ENCODE measurements at regions of chr14 and their contacts with region 1.

Region 1: GRCh38 chr14:73825551-73826188 is 26.0 kb upstream of the PTGR2 start:
- DNase-seq: peak; percentile 79 to 86
- H3K4me3 ChIP-seq: no peak overlapping the region
- H3K4me3 Mint-ChIP-seq: no peak overlapping the region
- H3K27ac Mint-ChIP-seq: no peak overlapping the region
- H3K4me1 ChIP-seq: peaks cover 4% of the 10 kb centered on the region; the same call in 1 of the 2 replicates
- H3K4me1 Mint-ChIP-seq: peaks cover 8% of the 10 kb centered on the region
- H3K27me3 ChIP-seq: no peaks in the 10 kb centered on the region
- H3K27me3 Mint-ChIP-seq: no peaks in the 10 kb centered on the region
- CTCF ChIP-seq: peak; percentile 89 to 93

Region 2: GRCh38 chr14:73553845-73554244 is 271.8 kb before region 1 on chr14:
- CTCF ChIA-PET with region 1: no interaction called
- POLR2A ChIA-PET with region 1: no interaction called
- intact Hi-C with region 1: no loop called
- DNase-seq: no peak
- H3K4me3 ChIP-seq: no peak overlapping the region
- H3K4me3 Mint-ChIP-seq: no peak overlapping the region
- H3K27ac Mint-ChIP-seq: no peak overlapping the region
- H3K4me1 ChIP-seq: no peaks in the 10 kb centered on the region
- H3K4me1 Mint-ChIP-seq: no peaks in the 10 kb centered on the region
- H3K27me3 ChIP-seq: no peaks in the 10 kb centered on the region
- H3K27me3 Mint-ChIP-seq: no peaks in the 10 kb centered on the region
- CTCF ChIP-seq: no peak

Region 3: GRCh38 chr14:73741386-73741875 is 84.2 kb before region 1 on chr14:
- CTCF ChIA-PET with region 1: interaction called, 4 read pairs
- POLR2A ChIA-PET with region 1: no interaction called
- intact Hi-C with region 1: loop called (anchors 5 kb)
- DNase-seq: peak; percentile 56 to 73
- H3K4me3 ChIP-seq: peak overlapping the region; percentile 15; the same call in 1 of the 2 replicates
- H3K4me3 Mint-ChIP-seq: peak overlapping the region; percentile 69
- H3K27ac Mint-ChIP-seq: peak overlapping the region; percentile 83
- H3K4me1 ChIP-seq: peaks cover 66% of the 10 kb centered on the region
- H3K4me1 Mint-ChIP-seq: peaks cover 39% of the 10 kb centered on the region
- H3K27me3 ChIP-seq: no peaks in the 10 kb centered on the region
- H3K27me3 Mint-ChIP-seq: no peaks in the 10 kb centered on the region
- CTCF ChIP-seq: no peak

Region 4: GRCh38 chr14:73777401-73777800 is 48.3 kb before region 1 on chr14:
- CTCF ChIA-PET with region 1: interaction called, 8 read pairs
- POLR2A ChIA-PET with region 1: interaction called, 14 read pairs
- intact Hi-C with region 1: no loop called
- DNase-seq: no peak
- H3K4me3 ChIP-seq: no peak overlapping the region
- H3K4me3 Mint-ChIP-seq: no peak overlapping the region
- H3K27ac Mint-ChIP-seq: no peak overlapping the region
- H3K4me1 ChIP-seq: peaks cover 1% of the 10 kb centered on the region
- H3K4me1 Mint-ChIP-seq: peaks cover 15% of the 10 kb centered on the region
- H3K27me3 ChIP-seq: no peaks in the 10 kb centered on the region
- H3K27me3 Mint-ChIP-seq: no peaks in the 10 kb centered on the region
- CTCF ChIP-seq: peak in 1 of 2 experiments; percentile 21

Region 5: GRCh38 chr14:73809391-73809790 is 16.3 kb before region 1 on chr14:
- CTCF ChIA-PET with region 1: no interaction called
- POLR2A ChIA-PET with region 1: no interaction called
- intact Hi-C with region 1: no loop called
- DNase-seq: no peak
- H3K4me3 ChIP-seq: no peak overlapping the region
- H3K4me3 Mint-ChIP-seq: no peak overlapping the region
- H3K27ac Mint-ChIP-seq: no peak overlapping the region
- H3K4me1 ChIP-seq: peaks cover 12% of the 10 kb centered on the region
- H3K4me1 Mint-ChIP-seq: peaks cover 5% of the 10 kb centered on the region
- H3K27me3 ChIP-seq: no peaks in the 10 kb centered on the region
- H3K27me3 Mint-ChIP-seq: no peaks in the 10 kb centered on the region
- CTCF ChIP-seq: no peak

Region 6: GRCh38 chr14:73878436-73878835 is 52.8 kb after region 1 on chr14:
- CTCF ChIA-PET with region 1: no interaction called
- POLR2A ChIA-PET with region 1: no interaction called
- intact Hi-C with region 1: no loop called
- DNase-seq: no peak
- H3K4me3 ChIP-seq: no peak overlapping the region
- H3K4me3 Mint-ChIP-seq: no peak overlapping the region
- H3K27ac Mint-ChIP-seq: no peak overlapping the region
- H3K4me1 ChIP-seq: no peaks in the 10 kb centered on the region
- H3K4me1 Mint-ChIP-seq: peaks cover 4% of the 10 kb centered on the region
- H3K27me3 ChIP-seq: no peaks in the 10 kb centered on the region
- H3K27me3 Mint-ChIP-seq: no peaks in the 10 kb centered on the region
- CTCF ChIP-seq: no peak

Region 7: DNA sequence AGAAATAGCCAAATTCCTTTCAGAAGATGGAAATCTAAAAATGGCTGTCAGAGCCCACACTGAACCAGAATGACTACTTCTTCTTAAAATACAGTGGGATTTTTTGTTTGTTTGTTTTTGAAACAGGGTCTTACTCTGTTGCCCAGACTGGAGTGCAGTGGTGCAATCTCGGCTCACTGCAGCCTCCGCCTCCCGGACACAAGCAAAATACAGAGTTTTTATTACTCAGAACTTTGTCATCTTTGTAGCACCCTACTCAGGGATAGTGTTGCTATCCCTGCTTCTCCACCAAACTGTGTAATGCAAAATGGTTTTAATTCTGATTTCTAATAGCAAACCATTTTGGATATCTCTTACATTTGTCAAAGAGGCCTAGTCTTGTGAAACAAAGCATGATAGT is 77.4 kb after region 1 on chr14:
- CTCF ChIA-PET with region 1: no interaction called
- POLR2A ChIA-PET with region 1: no interaction called
- intact Hi-C with region 1: no loop called
- DNase-seq: no peak
- H3K4me3 ChIP-seq: no peak overlapping the region
- H3K4me3 Mint-ChIP-seq: no peak overlapping the region
- H3K27ac Mint-ChIP-seq: no peak overlapping the region
- H3K4me1 ChIP-seq: no peaks in the 10 kb centered on the region
- H3K4me1 Mint-ChIP-seq: no peaks in the 10 kb centered on the region
- H3K27me3 ChIP-seq: no peaks in the 10 kb centered on the region
- H3K27me3 Mint-ChIP-seq: no peaks in the 10 kb centered on the region
- CTCF ChIP-seq: no peak